ENCODE measurements at regions of chr17 and their contacts with region 1.

Region 1: DNA sequence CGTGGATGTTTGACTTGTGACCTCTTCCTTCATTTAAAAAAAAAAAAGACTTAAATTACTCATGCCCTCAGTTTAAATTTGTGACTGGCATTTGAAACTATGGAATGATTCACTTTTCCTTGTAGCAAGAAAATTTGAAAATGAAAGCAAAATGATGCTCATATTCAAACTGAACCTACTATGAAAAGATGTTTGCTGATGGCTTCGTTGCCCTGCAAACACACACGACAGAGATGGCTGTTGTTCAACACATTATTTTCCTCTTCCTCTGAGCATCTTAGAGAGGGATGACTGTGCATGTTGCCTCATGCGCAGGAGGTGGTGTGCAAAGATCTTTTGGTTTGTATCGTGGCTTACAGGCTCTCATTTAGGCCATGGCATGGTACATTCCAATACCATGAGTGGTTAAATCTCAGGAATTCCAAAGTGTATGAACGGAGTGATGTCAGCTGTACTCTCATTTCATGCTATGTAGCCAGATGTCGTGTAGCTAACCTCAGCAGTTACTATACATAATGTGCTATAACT is 164.5 kb downstream of the PRKCA start:
- DNase-seq: peak in 1 of 9 donors; percentile 52
- ATAC-seq: peak; percentile 34
- H3K4me3 ChIP-seq: no peak overlapping the region
- H3K4me3 Mint-ChIP-seq: peak overlapping the region in 8 of 10 donors; percentile 40 to 84 (median 56)
- H3K27ac ChIP-seq: no peak overlapping the region
- H3K27ac Mint-ChIP-seq: peak overlapping the region in 7 of 9 donors; percentile 8 to 92 (median 73)
- H3K4me1 ChIP-seq: peaks cover 14 to 27% of the 10 kb centered on the region in 2 donors
- H3K4me1 Mint-ChIP-seq: peaks cover 50 to 96% (median 86%) of the 10 kb centered on the region in 7 donors
- H3K27me3 ChIP-seq: no peaks in the 10 kb centered on the region
- H3K27me3 Mint-ChIP-seq: no peaks in the 10 kb centered on the region

Region 2: GRCh38 chr17:66493991-66494803 is 27.3 kb after region 1 on chr17:
- CTCF ChIA-PET with region 1: no interaction called
- POLR2A ChIA-PET with region 1: no interaction called
- intact Hi-C with region 1: loop called in 1 of 2 experiments (anchors 2 kb)
- DNase-seq: peak in 2 of 9 donors; percentile 7 to 11
- ATAC-seq: peak; percentile 37
- H3K4me3 ChIP-seq: no peak overlapping the region
- H3K4me3 Mint-ChIP-seq: peak overlapping the region in 8 of 10 donors; percentile 4 to 54 (median 34)
- H3K27ac ChIP-seq: no peak overlapping the region
- H3K27ac Mint-ChIP-seq: peak overlapping the region; percentile 5 to 89 (median 67)
- H3K4me1 ChIP-seq: peaks cover 0 to 40% of the 10 kb centered on the region in 2 donors
- H3K4me1 Mint-ChIP-seq: peaks cover 38 to 90% (median 74%) of the 10 kb centered on the region in 7 donors
- H3K27me3 ChIP-seq: no peaks in the 10 kb centered on the region
- H3K27me3 Mint-ChIP-seq: no peaks in the 10 kb centered on the region

Region 3: GRCh38 chr17:66508896-66509843 is 42.3 kb after region 1 on chr17:
- CTCF ChIA-PET with region 1: no interaction called
- POLR2A ChIA-PET with region 1: no interaction called
- intact Hi-C with region 1: loop called in 1 of 2 experiments (anchors 5 kb)
- DNase-seq: peak in 1 of 9 donors; percentile 54
- ATAC-seq: no peak
- H3K4me3 ChIP-seq: no peak overlapping the region
- H3K4me3 Mint-ChIP-seq: peak overlapping the region in 8 of 10 donors; percentile 1 to 52 (median 22)
- H3K27ac ChIP-seq: no peak overlapping the region
- H3K27ac Mint-ChIP-seq: peak overlapping the region; percentile 7 to 97 (median 62)
- H3K4me1 ChIP-seq: peaks cover 6 to 26% of the 10 kb centered on the region in 2 donors
- H3K4me1 Mint-ChIP-seq: peaks cover 32 to 88% (median 76%) of the 10 kb centered on the region in 7 donors
- H3K27me3 ChIP-seq: no peaks in the 10 kb centered on the region
- H3K27me3 Mint-ChIP-seq: no peaks in the 10 kb centered on the region

Region 4: GRCh38 chr17:66549731-66550207 is 82.9 kb after region 1 on chr17:
- CTCF ChIA-PET with region 1: no interaction called
- POLR2A ChIA-PET with region 1: interaction called, 3 read pairs
- intact Hi-C with region 1: loop called in 1 of 2 experiments (anchors 5 kb)
- DNase-seq: no peak
- ATAC-seq: no peak
- H3K4me3 ChIP-seq: no peak overlapping the region
- H3K4me3 Mint-ChIP-seq: no peak overlapping the region
- H3K27ac ChIP-seq: no peak overlapping the region
- H3K27ac Mint-ChIP-seq: peak overlapping the region in 2 of 9 donors; percentile 1 to 20
- H3K4me1 ChIP-seq: peaks cover 17 to 21% of the 10 kb centered on the region in 2 donors
- H3K4me1 Mint-ChIP-seq: peaks cover 28 to 67% (median 62%) of the 10 kb centered on the region in 7 donors
- H3K27me3 ChIP-seq: no peaks in the 10 kb centered on the region
- H3K27me3 Mint-ChIP-seq: no peaks in the 10 kb centered on the region